Activated CD4-positive, alpha-beta T cell treated with anti-CD3 and anti-CD28 coated beads, Interleukin-2, amount 10 ng/mL, durations not matched to agents 7 days and 5 days (primary cell): ENCODE measurements at regions of chr6 and their contacts with region 1.

Region 1: DNA sequence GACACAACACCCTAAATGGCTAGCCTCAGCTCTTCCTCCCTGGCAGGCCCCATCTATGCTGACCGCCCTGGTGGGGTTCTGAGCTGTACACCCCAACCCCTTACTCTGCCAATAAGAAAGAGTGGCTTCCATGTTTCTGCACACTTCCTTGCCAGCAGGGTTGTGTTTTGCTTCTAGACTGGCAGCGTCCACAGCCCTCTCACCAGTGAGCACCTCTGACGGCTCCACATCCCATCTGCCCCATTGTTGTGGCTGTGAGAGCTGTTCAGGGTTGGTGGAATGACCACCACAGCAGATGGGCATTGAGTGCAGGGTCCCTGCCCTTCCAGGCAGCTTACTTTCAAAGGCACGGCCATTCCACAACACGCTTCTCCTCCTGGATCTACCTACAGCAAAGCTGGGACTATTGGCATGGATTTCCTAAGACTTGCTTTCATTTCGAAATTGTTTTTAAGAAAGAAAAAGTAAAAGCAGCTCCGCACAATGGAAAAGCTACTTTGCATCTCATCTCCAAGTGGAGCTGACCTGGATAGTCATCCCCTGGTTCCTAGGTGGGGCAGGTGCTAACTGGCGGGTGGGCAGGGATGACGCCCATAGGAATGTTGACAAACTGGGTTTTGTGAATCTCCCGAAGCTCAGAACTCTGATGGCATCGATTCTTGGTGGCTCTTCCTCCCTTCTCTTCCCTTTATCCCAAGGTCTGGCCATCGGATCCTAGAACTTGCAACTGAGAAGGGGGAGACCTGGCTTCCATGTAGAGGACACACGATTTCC is 12.2 kb upstream of the EZR start:
- DNase-seq: no peak
- H3K4me3 Mint-ChIP-seq: no peak overlapping the region
- H3K27ac Mint-ChIP-seq: no peak overlapping the region
- H3K4me1 Mint-ChIP-seq: peaks cover 5% of the 10 kb centered on the region
- H3K27me3 Mint-ChIP-seq: peaks cover 8% of the 10 kb centered on the region

Region 2: DNA sequence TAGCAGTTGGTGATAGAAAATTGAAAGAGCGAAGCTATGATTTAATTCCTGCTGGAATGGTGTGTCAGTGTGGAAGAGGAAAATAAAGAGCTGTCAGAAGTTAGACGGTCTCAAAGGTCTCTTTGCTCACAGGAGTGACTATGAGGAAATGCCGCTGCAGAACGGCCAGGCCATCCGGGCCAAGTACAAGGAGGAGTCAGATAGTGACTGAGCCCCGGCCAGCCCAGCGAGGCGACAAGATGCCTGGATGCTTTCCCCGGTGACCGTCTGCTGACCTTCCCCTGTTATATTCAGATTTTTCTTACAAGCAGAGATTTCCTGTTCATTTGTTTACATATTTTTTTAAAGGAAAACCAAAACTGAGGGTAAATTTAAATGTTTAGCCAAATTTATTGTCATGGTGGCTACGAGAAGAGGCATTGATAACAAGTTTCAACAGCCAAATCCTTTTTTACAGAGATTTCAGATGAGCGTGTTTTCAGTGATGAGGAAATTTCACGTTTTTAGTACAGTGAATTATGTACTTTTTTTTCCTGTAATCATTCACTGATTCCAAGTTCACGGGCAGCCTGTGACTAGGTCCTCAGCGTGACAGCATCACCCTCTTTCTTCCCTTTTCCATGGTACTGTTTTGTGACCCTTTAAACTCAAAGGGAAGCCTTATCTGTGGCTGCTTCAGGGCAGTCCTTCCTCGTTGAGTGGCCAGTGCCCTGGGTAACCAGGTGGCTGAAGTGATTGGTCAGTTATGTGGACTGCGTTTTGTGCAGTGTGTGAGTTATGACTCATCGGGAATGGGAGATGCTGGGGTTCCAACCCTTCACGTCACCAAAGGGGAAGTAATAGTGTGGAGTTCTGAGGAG is 199.5 kb before region 1 on chr6:
- CTCF ChIA-PET with region 1: no interaction called
- POLR2A ChIA-PET with region 1: no interaction called
- DNase-seq: no peak
- H3K4me3 Mint-ChIP-seq: no peak overlapping the region
- H3K27ac Mint-ChIP-seq: peak overlapping the region; percentile 82
- H3K4me1 Mint-ChIP-seq: peaks cover 64% of the 10 kb centered on the region
- H3K27me3 Mint-ChIP-seq: no peaks in the 10 kb centered on the region

Region 3: DNA sequence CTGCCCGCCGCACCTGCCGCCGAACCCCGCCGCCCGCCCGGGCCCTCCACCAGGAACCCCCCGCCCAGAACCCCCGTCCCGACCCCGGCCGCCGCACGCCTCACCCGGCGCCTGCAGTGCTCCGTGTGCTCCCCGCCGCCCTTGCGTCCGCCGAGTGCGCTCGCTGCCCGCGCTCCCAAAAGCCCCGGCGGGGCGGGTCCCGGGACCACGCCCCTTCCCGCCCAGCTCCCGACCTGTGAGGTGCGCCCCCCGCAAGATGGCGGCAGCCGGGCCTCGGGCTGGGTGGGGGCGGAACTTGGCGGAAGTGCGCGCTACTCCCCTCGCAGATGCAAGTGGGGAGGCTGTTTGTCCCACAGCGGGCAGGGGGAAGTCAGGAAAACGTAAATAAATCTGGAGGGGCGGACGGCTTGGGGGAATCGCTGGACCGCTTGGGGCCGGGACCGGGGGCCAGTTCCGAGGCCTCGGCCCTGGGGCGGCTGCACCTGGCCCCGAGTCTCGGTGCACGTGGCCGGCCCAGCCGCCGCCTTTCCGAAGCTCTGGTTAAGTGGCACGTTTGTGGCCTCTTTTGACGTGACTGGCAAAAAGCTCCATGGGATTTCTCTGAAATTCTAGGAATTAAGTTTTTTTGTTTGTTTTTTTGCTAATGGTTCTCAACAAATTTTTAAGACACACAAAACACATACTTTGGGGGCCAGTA is 12.0 kb before region 1 on chr6 and contains the start of gene EZR:
- CTCF ChIA-PET with region 1: interaction called, 10 read pairs
- POLR2A ChIA-PET with region 1: no interaction called
- DNase-seq: peak; percentile 81
- H3K4me3 Mint-ChIP-seq: peak within 1 kb of the TSS; percentile 100
- H3K27ac Mint-ChIP-seq: peak within 1 kb of the TSS; percentile 98
- H3K4me1 Mint-ChIP-seq: peaks cover 42% of the 10 kb centered on the region
- H3K27me3 Mint-ChIP-seq: no peaks in the 10 kb centered on the region
- total RNA-seq, gene EZR: 201 to 210 TPM